ENCODE measurements at regions of chr4 and their contacts with region 1.

Region 1: GRCh38 chr4:129344058-129344457 is 248.1 kb downstream of the C4orf33 start:
- DNase-seq: peak; percentile 71
- ATAC-seq: peak; percentile 80
- H3K4me3 ChIP-seq: peak overlapping the region; percentile 32; the same call in 1 of the 2 replicates
- H3K27ac ChIP-seq: no peak overlapping the region
- H3K4me1 ChIP-seq: peaks cover 21% of the 10 kb centered on the region
- H3K27me3 ChIP-seq: no peaks in the 10 kb centered on the region
- CTCF ChIP-seq: peak; percentile 76

Region 2: DNA sequence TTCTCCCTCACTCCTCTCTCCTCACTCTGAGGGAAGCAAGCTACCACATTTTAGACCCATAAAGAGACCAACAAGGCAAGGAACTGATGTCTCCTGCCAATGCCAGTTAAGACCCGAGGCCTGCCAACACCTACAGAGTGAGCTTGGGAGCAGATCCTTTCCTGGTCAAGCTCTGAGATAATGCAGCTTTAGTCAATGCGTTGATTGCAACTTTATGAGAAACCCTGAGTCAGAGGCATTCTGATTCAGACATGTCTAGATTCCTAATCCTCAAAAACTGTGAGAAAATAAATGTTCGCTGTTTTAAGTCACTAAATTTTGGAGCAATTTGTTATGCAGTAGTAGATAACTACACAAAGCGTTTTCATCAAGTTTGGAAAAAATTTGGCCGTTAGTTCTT is 419.1 kb before region 1 on chr4:
- CTCF ChIA-PET with region 1: no interaction called
- POLR2A ChIA-PET with region 1: no interaction called
- intact Hi-C with region 1: no loop called
- DNase-seq: no peak
- ATAC-seq: no peak
- H3K4me3 ChIP-seq: no peak overlapping the region
- H3K27ac ChIP-seq: no peak overlapping the region
- H3K4me1 ChIP-seq: no peaks in the 10 kb centered on the region
- H3K27me3 ChIP-seq: no peaks in the 10 kb centered on the region
- CTCF ChIP-seq: no peak

Region 3: GRCh38 chr4:129093191-129093920 is 250.7 kb before region 1 on chr4 and contains the start of gene SCLT1:
- CTCF ChIA-PET with region 1: no interaction called
- POLR2A ChIA-PET with region 1: no interaction called
- intact Hi-C with region 1: loop called (anchors 5 kb)
- DNase-seq: peak; percentile 98
- ATAC-seq: peak; percentile 87
- H3K4me3 ChIP-seq: peak within 1 kb of the TSS; percentile 83
- H3K27ac ChIP-seq: peak within 1 kb of the TSS; percentile 74
- H3K4me1 ChIP-seq: peaks cover 27% of the 10 kb centered on the region; the same call in 1 of the 2 replicates
- H3K27me3 ChIP-seq: no peaks in the 10 kb centered on the region
- CTCF ChIP-seq: no peak
- total RNA-seq, gene SCLT1: 14.2 and 15.2 TPM in 2 replicates

Region 4: GRCh38 chr4:129218360-129218759 is 125.7 kb before region 1 on chr4:
- CTCF ChIA-PET with region 1: no interaction called
- POLR2A ChIA-PET with region 1: no interaction called
- intact Hi-C with region 1: loop called (anchors 1 kb)
- DNase-seq: peak; percentile 53
- ATAC-seq: peak; percentile 97
- H3K4me3 ChIP-seq: no peak overlapping the region
- H3K27ac ChIP-seq: no peak overlapping the region
- H3K4me1 ChIP-seq: peaks cover 7% of the 10 kb centered on the region; the same call in 1 of the 2 replicates
- H3K27me3 ChIP-seq: no peaks in the 10 kb centered on the region
- CTCF ChIP-seq: peak; percentile 63

Region 5: DNA sequence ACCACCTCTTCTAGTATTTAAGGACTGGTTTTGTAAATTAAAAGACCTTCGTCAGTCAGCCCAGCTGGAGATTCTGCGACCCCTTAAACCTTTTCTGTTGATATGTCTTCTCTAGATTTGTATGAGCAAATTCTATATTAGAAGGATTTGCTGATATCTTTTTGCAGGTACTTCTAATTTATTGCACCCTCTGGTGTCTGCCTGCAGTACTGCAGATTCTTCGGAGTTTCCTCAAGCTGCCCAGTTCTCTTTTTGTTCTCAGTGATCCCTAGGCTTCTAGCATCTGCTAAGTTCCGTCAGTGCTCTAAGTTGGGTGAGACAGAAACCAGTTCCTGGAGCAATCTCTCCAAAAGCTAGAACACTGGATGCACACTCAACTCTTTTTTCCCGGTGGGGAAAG is 297.1 kb after region 1 on chr4:
- CTCF ChIA-PET with region 1: no interaction called
- POLR2A ChIA-PET with region 1: no interaction called
- intact Hi-C with region 1: loop called (anchors 1 kb)
- DNase-seq: peak; percentile 67
- ATAC-seq: peak; percentile 31; the same call in 1 of the 2 replicates
- H3K4me3 ChIP-seq: no peak overlapping the region
- H3K27ac ChIP-seq: no peak overlapping the region
- H3K4me1 ChIP-seq: no peaks in the 10 kb centered on the region
- H3K27me3 ChIP-seq: no peaks in the 10 kb centered on the region
- CTCF ChIP-seq: peak; percentile 75

Region 6: GRCh38 chr4:129929052-129929451 is 585.0 kb after region 1 on chr4:
- CTCF ChIA-PET with region 1: no interaction called
- POLR2A ChIA-PET with region 1: no interaction called
- intact Hi-C with region 1: loop called (anchors 10 kb)
- DNase-seq: peak; percentile 7
- ATAC-seq: no peak
- H3K4me3 ChIP-seq: no peak overlapping the region
- H3K27ac ChIP-seq: no peak overlapping the region
- H3K4me1 ChIP-seq: no peaks in the 10 kb centered on the region
- H3K27me3 ChIP-seq: no peaks in the 10 kb centered on the region
- CTCF ChIP-seq: peak; percentile 48

Measured in PC-3 (cell line).